ENCODE measurements at regions of chr7 and their contacts with region 1.

Region 1: GRCh38 chr7:150769768-150770167 is 30.4 kb downstream of the TMEM176B start:
- DNase-seq: no peak
- H3K4me3 ChIP-seq: no peak overlapping the region
- H3K27ac ChIP-seq: no peak overlapping the region
- H3K4me1 ChIP-seq: no peaks in the 10 kb centered on the region
- H3K27me3 ChIP-seq: no peaks in the 10 kb centered on the region
- CTCF ChIP-seq: no peak
- POLR2A ChIP-seq: no peak

Region 2: GRCh38 chr7:150881189-150881588 is 111.4 kb after region 1 on chr7:
- intact Hi-C with region 1: loop called (anchors 5 kb)
- DNase-seq: no peak
- H3K4me3 ChIP-seq: no peak overlapping the region
- H3K27ac ChIP-seq: no peak overlapping the region
- H3K4me1 ChIP-seq: peaks cover 0 to 10% of the 10 kb centered on the region in 2 donors
- H3K27me3 ChIP-seq: no peaks in the 10 kb centered on the region
- CTCF ChIP-seq: no peak
- POLR2A ChIP-seq: no peak

Region 3: DNA sequence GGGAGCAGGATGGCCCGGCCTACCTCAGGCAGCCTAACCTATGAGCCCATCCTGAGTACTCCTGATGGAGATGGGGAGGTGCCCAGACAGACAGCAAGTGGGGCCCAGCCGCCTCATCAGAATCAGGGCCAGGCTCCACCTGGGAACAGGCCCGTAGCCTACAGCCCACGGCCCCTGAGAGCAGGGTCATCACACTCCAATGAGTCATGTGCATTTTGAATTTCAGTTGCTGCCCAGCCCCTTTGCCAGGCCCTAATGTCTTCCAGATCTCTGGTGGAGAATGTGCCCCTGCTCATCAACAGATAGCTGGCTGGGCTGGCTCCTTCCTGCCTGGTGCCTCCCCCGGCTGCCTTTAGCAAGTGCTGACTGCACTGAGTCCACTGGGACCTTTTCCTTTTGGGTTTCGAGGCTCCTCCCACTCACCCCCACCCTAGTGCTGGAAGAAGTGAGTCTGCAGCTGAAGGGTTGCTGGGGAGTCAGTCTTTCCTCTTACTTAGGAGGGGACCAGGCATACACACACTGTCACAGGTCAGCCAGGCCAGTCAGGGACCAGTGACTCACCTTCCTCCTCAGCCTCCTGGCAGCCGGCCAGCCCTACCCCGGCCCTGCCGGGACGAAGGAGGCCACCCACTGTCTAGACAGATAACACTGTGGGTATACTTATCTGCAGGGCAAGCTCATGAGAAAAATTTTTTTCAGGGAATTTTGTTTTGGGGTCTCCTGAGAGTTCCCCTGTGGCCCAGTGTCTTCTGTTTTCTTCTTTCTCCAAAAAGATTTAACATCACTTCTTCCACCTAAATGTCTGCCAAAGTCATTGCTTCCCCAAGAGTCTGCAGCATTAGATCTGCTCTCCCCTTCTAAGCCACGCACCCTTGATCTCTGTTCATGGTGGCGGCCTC is 269.4 kb after region 1 on chr7:
- intact Hi-C with region 1: no loop called
- DNase-seq: peak; percentile 39 to 43
- H3K4me3 ChIP-seq: no peak overlapping the region
- H3K27ac ChIP-seq: peak overlapping the region in 2 of 3 donors; percentile 41 to 53
- H3K4me1 ChIP-seq: peaks cover 0 to 16% of the 10 kb centered on the region in 2 donors
- H3K27me3 ChIP-seq: no peaks in the 10 kb centered on the region
- CTCF ChIP-seq: no peak
- POLR2A ChIP-seq: no peak

Measured in thyroid gland (tissue), 4 donors.